ENCODE measurements at regions of chr3 and their contacts with region 1.

Region 1: GRCh38 chr3:27080258-27080525 is 289.0 kb downstream of the NEK10 start:
- DNase-seq: no peak
- ATAC-seq: no peak
- H3K4me3 Mint-ChIP-seq: no peak overlapping the region
- H3K27ac Mint-ChIP-seq: no peak overlapping the region
- H3K4me1 Mint-ChIP-seq: no peaks in the 10 kb centered on the region
- H3K27me3 Mint-ChIP-seq: peaks cover 2% of the 10 kb centered on the region

Region 2: GRCh38 chr3:26312816-26313215 is 767.4 kb before region 1 on chr3:
- CTCF ChIA-PET with region 1: no interaction called
- POLR2A ChIA-PET with region 1: interaction called, 13 read pairs
- intact Hi-C with region 1: no loop called
- DNase-seq: no peak
- ATAC-seq: no peak
- H3K4me3 Mint-ChIP-seq: no peak overlapping the region
- H3K27ac Mint-ChIP-seq: no peak overlapping the region
- H3K4me1 Mint-ChIP-seq: no peaks in the 10 kb centered on the region
- H3K27me3 Mint-ChIP-seq: no peaks in the 10 kb centered on the region

Region 3: GRCh38 chr3:27034255-27034654 is 45.9 kb before region 1 on chr3:
- CTCF ChIA-PET with region 1: no interaction called
- POLR2A ChIA-PET with region 1: no interaction called
- intact Hi-C with region 1: no loop called
- DNase-seq: no peak
- ATAC-seq: no peak
- H3K4me3 Mint-ChIP-seq: no peak overlapping the region
- H3K27ac Mint-ChIP-seq: no peak overlapping the region
- H3K4me1 Mint-ChIP-seq: no peaks in the 10 kb centered on the region
- H3K27me3 Mint-ChIP-seq: no peaks in the 10 kb centered on the region